ENCODE measurements at regions of chr16 and their contacts with region 1.

Region 1: DNA sequence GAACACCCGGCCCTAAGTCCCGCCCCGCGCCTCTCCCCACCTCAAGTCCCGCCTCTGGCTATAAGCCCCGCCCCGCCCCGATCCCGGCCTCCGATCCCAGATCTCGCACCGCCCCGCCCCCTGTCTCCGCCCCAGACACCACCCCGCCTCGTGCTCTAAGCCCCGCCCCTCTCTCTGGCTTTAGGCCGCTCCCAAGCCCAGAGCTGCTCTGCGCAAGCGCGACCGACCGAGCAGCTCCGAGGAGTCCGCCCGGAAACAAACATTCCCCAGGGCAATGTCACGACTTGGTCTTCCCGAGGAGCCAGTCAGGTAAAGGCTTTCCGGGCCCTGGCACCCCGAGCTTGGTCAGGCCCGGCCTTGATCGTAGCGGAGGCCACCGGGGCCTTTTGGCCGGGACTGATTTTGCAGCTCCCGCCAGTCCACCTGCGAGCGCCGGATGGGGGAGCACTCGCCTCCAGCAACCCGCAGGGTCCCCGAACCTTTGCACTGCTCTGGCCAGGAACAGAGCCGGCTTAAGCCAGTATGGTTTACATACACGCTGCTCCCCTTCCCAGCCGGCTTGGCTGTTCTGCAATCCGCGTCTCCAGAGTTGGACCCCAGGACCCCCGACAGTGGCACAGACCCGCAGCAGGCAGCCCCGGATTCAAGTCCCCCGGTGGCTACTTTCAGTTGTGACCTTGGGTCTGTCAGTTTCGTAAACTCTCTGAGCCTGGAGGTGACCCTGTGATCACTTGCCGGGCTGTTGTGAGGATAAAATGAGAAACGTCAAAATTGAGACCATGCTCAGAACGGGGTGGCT is at the start of gene NUDT7:
- DNase-seq: peak; percentile 98
- H3K4me3 Mint-ChIP-seq: peak within 1 kb of the TSS; percentile 81
- H3K27ac Mint-ChIP-seq: peak within 1 kb of the TSS; percentile 79
- H3K4me1 Mint-ChIP-seq: peaks cover 13% of the 10 kb centered on the region
- H3K27me3 Mint-ChIP-seq: no peaks in the 10 kb centered on the region
- total RNA-seq, gene NUDT7: 8.2 to 10.1 TPM

Region 2: DNA sequence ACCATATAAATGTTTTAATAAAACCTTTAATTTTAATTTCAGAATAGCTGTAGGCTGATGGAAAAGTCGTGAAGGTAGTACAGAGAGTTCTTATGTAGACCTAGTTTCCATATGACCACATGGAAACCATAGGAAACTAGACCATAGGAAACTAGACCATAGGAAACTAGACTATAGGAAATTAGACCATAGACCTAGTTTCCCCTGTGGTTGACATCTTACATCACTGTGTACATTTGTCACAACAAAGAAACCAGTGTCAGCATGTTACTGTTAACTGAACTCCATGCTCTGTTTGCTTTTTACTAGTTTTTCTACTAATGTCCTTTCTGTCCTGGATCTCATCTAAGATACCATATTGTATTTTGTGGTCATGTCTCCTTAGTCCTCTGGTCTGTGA is 14.4 kb after region 1 on chr16:
- CTCF ChIA-PET with region 1: interaction called, 3 read pairs
- POLR2A ChIA-PET with region 1: interaction called, 5 read pairs
- intact Hi-C with region 1: loop called (anchors 1 kb)
- DNase-seq: no peak
- H3K4me3 Mint-ChIP-seq: no peak overlapping the region
- H3K27ac Mint-ChIP-seq: no peak overlapping the region
- H3K4me1 Mint-ChIP-seq: peaks cover 4% of the 10 kb centered on the region
- H3K27me3 Mint-ChIP-seq: no peaks in the 10 kb centered on the region

Region 3: DNA sequence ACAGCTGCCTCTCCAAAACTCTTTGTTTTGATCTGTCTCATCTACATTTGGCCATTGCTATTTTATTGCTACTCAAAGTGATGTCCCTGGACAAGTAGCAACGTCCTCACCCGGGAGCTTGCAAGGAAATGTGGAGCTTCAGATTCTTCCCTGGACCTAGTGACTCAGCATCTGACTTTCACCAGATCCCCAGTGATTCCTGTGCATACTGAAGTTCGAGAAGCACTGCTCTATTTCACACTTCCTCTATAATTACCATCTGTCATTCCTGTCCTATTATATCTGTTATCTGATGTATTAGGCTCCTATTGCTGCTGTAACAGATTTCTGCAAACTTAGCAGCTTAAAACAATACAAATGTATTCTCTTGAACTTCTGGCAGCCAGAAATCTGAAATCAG is 37.3 kb after region 1 on chr16:
- CTCF ChIA-PET with region 1: no interaction called
- POLR2A ChIA-PET with region 1: no interaction called
- intact Hi-C with region 1: no loop called
- DNase-seq: no peak
- H3K4me3 Mint-ChIP-seq: no peak overlapping the region
- H3K27ac Mint-ChIP-seq: no peak overlapping the region
- H3K4me1 Mint-ChIP-seq: no peaks in the 10 kb centered on the region
- H3K27me3 Mint-ChIP-seq: peaks cover 3% of the 10 kb centered on the region

Region 4: DNA sequence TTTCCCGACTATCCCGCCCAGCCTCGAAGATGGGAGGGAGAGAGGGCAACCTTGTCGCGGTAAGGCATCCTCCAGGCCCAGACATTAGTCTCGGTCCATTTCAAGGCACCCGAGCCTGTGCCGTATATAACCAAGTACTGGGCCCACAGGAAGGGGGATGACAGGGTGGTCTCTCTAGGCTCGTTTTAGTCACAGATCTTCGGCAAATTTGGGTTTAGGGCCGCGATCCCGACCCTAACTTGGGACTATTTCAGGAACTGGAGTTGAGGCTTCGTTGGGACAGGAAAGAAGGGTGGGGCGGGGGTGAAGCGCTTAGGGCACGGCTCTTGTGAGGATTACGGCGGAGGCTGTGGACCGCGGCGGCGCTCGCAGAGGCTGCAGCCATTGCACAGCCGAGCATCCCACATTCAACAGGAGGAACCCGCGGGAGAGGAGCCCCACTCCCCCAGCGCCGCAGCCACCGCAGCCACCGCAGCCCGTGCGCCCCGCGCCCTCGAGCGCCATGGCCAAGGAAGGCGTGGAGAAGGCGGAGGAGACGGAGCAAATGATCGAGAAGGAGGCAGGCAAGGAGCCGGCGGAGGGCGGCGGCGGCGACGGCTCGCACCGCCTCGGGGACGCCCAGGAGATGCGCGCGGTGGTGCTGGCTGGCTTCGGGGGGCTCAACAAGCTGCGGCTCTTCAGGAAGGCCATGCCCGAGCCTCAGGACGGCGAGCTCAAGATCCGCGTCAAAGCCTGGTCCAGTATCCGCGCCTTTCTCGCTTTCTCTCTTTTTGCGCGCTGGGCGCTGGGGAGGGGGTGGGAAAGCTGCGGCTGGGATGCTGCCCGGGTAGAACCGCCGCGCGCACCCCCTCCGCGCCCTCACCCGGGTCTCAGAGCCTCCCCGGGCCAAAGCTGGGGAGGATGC is 65.9 kb after region 1 on chr16 and contains the start of gene VAT1L:
- CTCF ChIA-PET with region 1: no interaction called
- POLR2A ChIA-PET with region 1: no interaction called
- intact Hi-C with region 1: loop called (anchors 5 kb)
- DNase-seq: peak; percentile 17
- H3K4me3 Mint-ChIP-seq: peak within 1 kb of the TSS; percentile 69
- H3K27ac Mint-ChIP-seq: no peak within 1 kb of the TSS
- H3K4me1 Mint-ChIP-seq: peaks cover 12% of the 10 kb centered on the region
- H3K27me3 Mint-ChIP-seq: peaks cover 65% of the 10 kb centered on the region
- total RNA-seq, gene VAT1L: not detected